Endothelial cell of umbilical vein (primary cell): ENCODE measurements at regions of chr5 and their contacts with region 1.

Region 1: DNA sequence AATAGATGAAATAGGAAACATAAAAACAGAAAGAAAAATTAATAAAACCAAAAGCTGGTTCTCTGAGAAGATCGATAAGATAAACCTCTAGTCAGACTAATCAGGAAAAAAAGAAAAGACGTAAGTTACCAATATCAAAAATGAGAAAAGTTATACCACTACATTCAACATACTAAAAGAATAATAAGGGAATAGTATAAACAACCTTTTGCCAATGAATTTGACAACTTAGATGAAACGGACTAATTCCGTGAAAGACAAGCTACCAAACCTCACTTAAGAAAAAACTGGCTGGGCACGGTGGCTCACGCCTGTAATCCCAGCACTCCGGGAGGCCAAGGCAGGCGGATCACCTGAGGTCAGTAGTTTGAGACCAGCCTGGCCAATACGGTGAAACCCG is 7.5 kb downstream of the KIF3A start:
- DNase-seq: no peak
- H3K4me3 ChIP-seq: no peak overlapping the region
- H3K27ac ChIP-seq: no peak overlapping the region
- H3K4me1 ChIP-seq: no peaks in the 10 kb centered on the region
- H3K27me3 ChIP-seq: no peaks in the 10 kb centered on the region
- CTCF ChIP-seq: no peak
- POLR2A ChIP-seq: no peak

Region 2: DNA sequence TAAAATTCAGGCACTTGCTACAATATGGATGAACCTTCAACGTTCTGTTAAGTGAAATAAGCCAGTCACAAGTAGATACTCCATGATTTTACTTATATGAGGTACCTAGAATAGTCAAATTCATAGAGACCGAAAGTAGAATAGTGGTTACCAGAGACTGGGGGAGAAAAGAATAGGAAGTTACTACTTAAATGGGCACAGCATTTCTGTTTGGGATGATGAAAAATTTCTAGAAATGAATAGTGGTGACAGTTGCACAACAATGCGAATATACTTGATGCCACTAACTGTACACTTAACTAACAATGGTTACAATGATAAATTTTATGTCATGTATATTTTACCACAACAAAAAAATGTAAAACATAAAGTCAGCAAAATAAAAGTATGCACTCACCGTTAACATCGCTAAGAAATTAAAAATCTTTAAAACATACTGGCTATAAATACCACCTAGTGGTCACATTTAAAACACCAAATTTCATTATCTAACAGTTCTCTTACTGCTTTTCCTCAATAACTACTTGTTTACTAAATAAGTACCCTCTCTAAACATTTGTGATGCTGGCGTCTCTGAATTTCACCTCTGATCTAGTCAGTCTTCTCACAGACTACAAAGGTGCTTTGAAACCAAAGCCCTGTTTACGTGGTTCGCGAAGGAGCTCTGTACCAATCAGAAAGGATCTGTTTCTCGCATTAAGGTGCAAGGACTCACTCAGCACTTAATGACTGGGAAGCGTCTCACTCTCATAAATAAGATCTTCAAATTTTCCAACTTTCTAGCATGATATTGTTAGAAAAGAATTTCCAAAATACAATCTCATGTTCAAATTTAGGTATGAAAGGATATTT is 15.2 kb before region 1 on chr5:
- CTCF ChIA-PET with region 1: interaction called, 15 read pairs
- POLR2A ChIA-PET with region 1: no interaction called
- dilution Hi-C with region 1: no loop called
- intact Hi-C with region 1: no loop called
- DNase-seq: peak; percentile 28
- H3K4me3 ChIP-seq: no peak overlapping the region
- H3K27ac ChIP-seq: no peak overlapping the region
- H3K4me1 ChIP-seq: no peaks in the 10 kb centered on the region
- H3K27me3 ChIP-seq: no peaks in the 10 kb centered on the region
- CTCF ChIP-seq: peak; percentile 12 to 18
- POLR2A ChIP-seq: no peak

Region 3: DNA sequence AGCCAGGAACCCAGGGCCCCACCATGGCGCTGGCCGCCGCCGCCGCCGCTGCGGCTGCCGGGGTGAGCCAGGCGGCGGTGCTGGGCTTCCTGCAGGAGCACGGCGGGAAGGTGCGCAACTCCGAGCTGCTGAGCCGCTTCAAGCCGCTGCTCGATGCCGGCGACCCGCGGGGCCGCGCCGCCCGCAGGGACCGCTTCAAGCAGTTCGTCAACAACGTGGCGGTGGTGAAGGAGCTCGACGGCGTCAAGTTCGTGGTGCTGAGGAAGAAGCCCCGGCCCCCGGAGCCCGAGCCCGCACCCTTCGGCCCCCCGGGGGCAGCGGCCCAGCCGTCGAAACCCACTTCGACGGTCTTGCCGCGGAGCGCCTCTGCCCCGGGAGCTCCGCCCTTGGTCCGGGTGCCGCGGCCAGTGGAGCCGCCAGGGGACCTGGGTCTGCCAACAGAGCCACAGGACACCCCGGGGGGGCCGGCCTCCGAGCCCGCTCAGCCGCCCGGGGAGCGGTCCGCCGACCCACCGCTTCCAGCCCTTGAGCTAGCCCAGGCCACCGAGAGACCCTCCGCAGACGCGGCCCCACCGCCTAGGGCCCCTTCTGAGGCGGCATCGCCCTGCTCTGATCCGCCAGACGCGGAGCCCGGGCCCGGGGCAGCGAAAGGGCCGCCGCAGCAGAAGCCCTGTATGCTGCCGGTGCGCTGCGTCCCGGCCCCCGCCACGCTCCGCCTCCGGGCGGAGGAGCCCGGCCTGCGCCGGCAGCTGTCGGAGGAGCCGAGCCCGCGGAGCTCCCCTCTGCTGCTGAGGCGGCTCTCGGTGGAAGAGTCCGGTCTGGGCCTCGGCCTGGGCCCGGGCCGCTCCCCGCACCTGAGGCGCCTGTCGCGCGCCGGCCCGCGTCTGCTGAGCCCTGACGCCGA is 84.0 kb after region 1 on chr5:
- CTCF ChIA-PET with region 1: no interaction called
- POLR2A ChIA-PET with region 1: no interaction called
- dilution Hi-C with region 1: no loop called
- intact Hi-C with region 1: no loop called
- DNase-seq: peak; percentile 21
- H3K4me3 ChIP-seq: peak overlapping the region in 2 of 3 experiments; percentile 9 to 11
- H3K27ac ChIP-seq: no peak overlapping the region
- H3K4me1 ChIP-seq: no peaks in the 10 kb centered on the region
- H3K27me3 ChIP-seq: peaks cover 19 to 33% of the 10 kb centered on the region in 2 experiments
- CTCF ChIP-seq: no peak
- POLR2A ChIP-seq: no peak

Region 4: GRCh38 chr5:132829742-132830435 is 100.0 kb after region 1 on chr5:
- CTCF ChIA-PET with region 1: no interaction called
- POLR2A ChIA-PET with region 1: no interaction called
- dilution Hi-C with region 1: no loop called
- intact Hi-C with region 1: no loop called
- DNase-seq: peak; percentile 75
- H3K4me3 ChIP-seq: peak overlapping the region; percentile 41 to 59 (median 49)
- H3K27ac ChIP-seq: peak overlapping the region; percentile 32
- H3K4me1 ChIP-seq: peaks cover 12% of the 10 kb centered on the region
- H3K27me3 ChIP-seq: no peaks in the 10 kb centered on the region
- CTCF ChIP-seq: peak; percentile 92 to 99
- POLR2A ChIP-seq: peak; percentile 28